ENCODE measurements at regions of chr21 and their contacts with region 1.

Region 1: DNA sequence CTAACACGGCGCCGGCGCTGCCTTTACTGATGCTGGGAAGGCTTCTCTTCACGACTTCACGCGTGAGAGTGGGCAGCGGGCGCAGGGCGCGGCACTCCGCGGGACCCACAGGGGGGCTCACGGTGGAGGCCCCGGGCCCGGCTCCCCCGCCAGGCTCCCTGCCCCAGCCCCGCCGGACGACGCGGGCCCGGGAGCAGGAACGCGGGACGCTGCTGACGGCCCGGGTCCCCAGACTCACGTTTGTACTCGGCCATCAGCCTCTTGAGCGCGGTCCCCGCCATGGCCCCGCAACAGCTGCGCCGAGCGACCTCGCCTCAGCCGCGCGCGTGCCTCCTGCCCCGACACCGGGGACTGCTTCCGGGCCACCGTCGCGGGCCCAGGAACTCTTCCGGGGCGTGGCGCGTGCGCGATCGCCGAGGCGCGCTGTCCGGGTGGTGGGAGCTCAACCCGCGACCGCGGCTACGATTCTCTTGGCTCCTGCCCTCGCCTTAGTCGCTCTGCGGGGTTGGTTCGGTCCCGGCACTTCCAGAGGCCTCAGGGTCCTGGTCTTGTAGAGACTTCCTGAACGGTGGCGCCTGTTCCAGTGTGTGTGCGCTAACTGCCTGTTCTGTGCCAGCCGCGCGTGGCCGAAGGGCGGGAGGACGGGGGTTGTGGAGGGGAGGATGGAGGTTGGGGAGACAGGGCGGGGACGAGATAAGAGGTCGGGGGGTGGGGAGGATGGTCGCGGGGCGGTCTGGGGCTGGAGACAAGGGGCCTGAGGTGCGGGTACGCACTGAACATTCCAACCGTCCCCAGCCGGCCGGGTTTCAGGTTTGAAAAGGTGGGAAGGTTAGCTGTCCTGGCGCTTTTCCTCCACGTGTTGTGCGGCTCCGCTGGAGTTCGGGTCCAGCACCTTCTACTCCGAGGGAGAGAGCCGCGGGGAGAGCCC is at the start of gene UBE2G2:
- DNase-seq: peak; percentile 88
- ATAC-seq: peak; percentile 96
- H3K4me3 Mint-ChIP-seq: peak within 1 kb of the TSS; percentile 93
- H3K27ac Mint-ChIP-seq: peak within 1 kb of the TSS; percentile 89
- H3K4me1 Mint-ChIP-seq: peaks cover 55% of the 10 kb centered on the region
- H3K27me3 Mint-ChIP-seq: no peaks in the 10 kb centered on the region
- total RNA-seq, gene UBE2G2: 85.5 to 86.0 TPM

Region 2: GRCh38 chr21:44742418-44743153 is 59.1 kb before region 1 on chr21:
- CTCF ChIA-PET with region 1: no interaction called
- POLR2A ChIA-PET with region 1: no interaction called
- DNase-seq: no peak
- ATAC-seq: no peak
- H3K4me3 Mint-ChIP-seq: no peak overlapping the region
- H3K27ac Mint-ChIP-seq: no peak overlapping the region
- H3K4me1 Mint-ChIP-seq: no peaks in the 10 kb centered on the region
- H3K27me3 Mint-ChIP-seq: no peaks in the 10 kb centered on the region

Region 3: DNA sequence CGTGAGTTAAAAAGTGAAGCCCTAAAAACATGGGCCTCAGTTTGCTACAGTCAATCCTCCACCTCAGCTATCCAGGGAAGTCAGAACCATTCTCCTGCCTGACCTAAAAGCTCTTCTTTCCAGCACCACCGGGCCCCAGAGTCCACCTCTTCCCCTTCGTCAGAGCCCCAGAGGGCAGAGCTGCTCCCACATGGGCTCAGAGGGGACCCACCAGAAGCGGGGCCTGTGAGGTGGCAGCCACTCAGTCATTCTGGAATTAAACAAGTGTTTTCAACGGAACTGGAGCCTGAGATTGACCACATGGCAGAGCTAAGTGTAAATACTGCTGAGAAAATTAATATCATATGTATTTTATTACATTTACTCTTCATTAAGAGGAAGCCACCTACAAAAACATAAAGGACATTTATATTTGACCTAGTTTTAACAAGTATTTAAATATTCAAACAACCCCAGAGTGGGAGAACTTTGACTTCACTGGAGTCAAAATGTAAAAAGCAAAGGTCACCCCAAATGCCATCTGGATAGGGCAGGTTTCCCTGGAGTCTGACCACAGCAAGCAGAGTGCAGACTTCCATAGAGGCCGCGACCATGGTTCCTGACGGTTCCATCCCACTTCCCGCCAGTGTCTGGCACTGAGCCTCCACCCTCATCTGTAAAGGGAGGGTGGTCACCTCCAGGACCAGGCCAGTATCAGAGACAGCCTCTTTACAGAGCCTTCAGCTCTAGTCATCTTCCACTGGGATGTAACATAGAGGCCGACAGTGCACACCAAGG is 14.3 kb after region 1 on chr21:
- CTCF ChIA-PET with region 1: interaction called, 13 read pairs
- POLR2A ChIA-PET with region 1: interaction called, 4 read pairs
- DNase-seq: no peak
- ATAC-seq: no peak
- H3K4me3 Mint-ChIP-seq: peak overlapping the region; percentile 72
- H3K27ac Mint-ChIP-seq: no peak overlapping the region
- H3K4me1 Mint-ChIP-seq: peaks cover 32% of the 10 kb centered on the region
- H3K27me3 Mint-ChIP-seq: peaks cover 2% of the 10 kb centered on the region

Region 4: DNA sequence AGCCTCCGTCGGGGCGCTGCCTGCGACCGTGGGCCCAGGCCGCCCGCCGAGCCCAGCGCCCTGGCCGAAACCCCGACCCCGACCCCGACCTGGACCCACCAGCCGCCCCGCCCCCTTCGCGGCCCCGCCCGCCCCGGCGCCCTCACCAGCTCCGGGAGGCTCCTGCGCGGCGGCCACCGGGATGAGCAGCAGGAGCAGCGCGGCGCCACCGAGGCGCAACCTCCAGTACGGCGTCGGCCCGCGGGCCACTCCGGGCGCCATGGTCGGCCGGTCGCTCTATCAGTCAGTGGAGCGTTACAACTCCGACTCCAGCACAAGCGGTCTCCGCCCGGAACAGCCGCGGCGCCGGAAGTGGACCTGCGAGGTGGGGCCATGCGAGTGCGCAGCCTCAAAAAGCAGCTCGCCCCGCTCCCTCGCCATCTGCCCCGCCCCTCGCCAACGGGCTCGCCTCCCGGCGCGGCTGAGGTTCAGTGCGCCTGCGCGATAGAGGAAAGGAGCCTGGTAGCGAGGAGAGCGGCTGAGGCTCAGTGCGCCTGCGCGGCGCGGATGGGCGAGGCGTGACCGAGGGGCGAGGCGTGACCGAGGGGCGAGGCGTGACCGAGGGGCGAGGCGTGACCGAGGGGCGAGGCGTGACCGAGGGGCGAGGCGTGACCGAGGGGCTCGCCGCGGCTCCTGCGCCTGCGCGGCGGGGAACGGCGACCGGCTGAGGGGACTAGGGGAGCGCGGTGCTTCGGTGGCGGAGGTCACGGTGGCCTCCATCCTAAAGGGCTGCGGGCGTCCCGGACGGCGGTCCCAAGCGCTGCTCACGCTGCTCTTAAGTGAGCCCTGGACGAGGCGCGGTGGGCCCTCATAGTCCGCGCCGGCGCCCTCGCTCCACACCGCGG is 71.9 kb after region 1 on chr21 and contains the start of gene PTTG1IP:
- CTCF ChIA-PET with region 1: interaction called, 106 read pairs
- POLR2A ChIA-PET with region 1: interaction called, 6 read pairs
- DNase-seq: peak; percentile 99
- ATAC-seq: peak; percentile 83
- H3K4me3 Mint-ChIP-seq: peak within 1 kb of the TSS; percentile 92
- H3K27ac Mint-ChIP-seq: peak within 1 kb of the TSS; percentile 90
- H3K4me1 Mint-ChIP-seq: peaks cover 60% of the 10 kb centered on the region
- H3K27me3 Mint-ChIP-seq: no peaks in the 10 kb centered on the region
- total RNA-seq, gene PTTG1IP: 54.9 to 55.2 TPM

Region 5: DNA sequence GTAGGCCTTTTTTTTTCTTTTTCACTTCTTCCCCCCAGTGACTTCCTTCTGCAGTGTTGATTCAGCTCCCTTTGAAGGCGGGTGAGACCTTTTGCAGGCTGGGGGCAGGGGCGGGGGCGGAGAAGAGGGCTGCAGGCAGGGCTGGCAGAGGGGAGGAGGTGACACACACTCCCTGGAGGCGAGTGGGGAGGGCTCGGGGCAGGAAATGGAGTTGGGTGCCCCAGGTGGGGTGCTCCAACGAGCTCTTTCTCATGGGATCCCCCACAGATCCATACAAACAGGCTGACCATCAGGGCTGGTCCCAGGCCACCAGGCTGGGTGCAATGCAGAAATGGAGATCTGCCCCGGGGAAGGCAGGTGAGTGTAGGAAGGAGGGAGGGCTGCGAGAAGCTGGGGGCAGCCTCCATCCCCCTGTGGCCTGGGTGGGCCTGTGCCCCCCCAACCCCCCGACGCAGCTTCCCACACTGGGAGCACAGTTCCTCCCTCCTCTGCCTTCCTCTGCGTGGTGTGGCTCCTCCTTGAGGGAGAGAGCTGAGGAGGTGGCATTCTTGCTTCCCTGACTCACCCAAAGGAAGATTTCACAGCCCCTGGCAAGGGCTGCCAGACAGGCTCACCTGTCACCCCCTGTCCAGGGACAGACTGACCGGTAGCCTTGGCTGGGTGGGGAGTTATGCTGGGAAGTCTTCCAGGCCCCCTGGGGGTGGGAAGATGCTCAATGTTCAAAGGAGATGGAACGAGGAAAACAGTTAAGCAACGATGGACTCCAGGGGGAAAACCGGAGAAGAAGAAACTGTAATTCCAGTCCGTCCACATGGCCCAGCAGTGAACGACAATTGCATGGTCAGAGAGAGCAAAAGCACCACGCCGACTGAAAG is 126.1 kb after region 1 on chr21:
- CTCF ChIA-PET with region 1: interaction called, 81 read pairs
- POLR2A ChIA-PET with region 1: interaction called, 9 read pairs
- DNase-seq: peak; percentile 92
- ATAC-seq: peak; percentile 54
- H3K4me3 Mint-ChIP-seq: peak overlapping the region; percentile 84
- H3K27ac Mint-ChIP-seq: peak overlapping the region; percentile 94
- H3K4me1 Mint-ChIP-seq: peaks cover 82% of the 10 kb centered on the region
- H3K27me3 Mint-ChIP-seq: no peaks in the 10 kb centered on the region

Measured in activated CD8-positive, alpha-beta T cell treated with anti-CD3 and anti-CD28 coated beads, Interleukin-2, amount 10 ng/mL, durations not matched to agents 7 days and 5 days (primary cell).